Activated B cell treated with CpG ODN at 0.5 μM for 24 hours (primary cell): ENCODE measurements at regions of chr1 and their contacts with region 1.

Region 1: DNA sequence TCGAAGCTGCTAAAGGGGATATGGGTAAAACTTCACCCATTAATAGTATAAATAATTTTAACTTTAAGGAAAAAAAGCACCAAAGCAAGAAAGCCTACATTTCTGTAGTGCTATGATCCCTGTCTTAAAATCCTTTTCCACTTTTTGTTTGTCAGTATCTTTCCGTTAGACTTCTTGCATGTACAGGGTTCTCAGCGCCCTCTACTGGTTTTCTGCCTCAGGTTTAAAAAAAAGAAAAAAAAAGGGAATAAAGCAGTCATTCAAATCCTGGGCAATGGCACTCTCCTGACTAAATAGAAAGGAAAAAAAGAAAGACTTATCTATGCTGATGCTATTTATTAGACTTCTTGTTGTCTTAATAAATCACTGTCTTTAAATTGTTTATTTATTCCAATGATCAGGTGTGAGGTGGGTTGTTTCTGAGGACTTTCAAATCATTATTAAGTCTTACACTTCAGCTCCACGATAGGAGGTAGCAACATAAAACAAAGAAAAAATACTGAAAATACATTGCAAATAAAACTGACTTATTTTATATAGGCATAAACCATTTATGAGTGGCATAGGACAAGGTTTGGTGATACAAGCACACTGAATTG is 475.4 kb upstream of the NR5A2 start:
- DNase-seq: no peak
- ATAC-seq: no peak
- H3K4me3 Mint-ChIP-seq: no peak overlapping the region
- H3K27ac Mint-ChIP-seq: no peak overlapping the region
- H3K4me1 Mint-ChIP-seq: no peaks in the 10 kb centered on the region
- H3K27me3 Mint-ChIP-seq: peaks cover 6% of the 10 kb centered on the region
- CTCF ChIP-seq: peak; percentile 99

Region 2: DNA sequence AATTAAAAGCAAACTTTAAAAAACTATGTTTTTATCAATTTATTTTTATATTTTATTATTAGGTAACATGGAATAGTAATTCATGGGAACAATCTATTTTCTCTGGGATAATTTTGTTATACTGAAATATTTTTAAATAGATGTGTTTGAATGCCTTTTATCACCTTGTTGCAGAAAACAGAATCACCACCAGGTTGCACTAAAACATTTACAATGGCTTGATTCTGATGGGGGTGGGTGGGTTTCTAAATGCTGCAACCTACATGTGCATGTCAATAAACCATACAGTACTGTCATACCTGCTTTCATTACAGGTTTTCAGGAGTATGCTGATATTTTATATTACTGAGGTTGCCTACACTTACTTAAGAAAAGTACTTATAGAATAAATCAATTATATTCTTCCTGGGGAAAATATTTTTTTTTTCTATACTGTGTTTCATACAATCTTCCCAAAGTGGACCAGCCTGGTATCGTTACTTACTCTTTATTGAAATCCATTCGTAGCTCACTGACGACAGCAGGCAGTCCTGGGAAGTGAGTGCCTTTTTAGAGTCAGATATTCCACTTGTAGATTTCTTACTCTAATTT is 780.4 kb before region 1 on chr1:
- CTCF ChIA-PET with region 1: interaction called, 3 read pairs
- POLR2A ChIA-PET with region 1: no interaction called
- intact Hi-C with region 1: loop called (anchors 1 kb)
- DNase-seq: no peak
- ATAC-seq: no peak
- H3K4me3 Mint-ChIP-seq: no peak overlapping the region
- H3K27ac Mint-ChIP-seq: no peak overlapping the region
- H3K4me1 Mint-ChIP-seq: no peaks in the 10 kb centered on the region
- H3K27me3 Mint-ChIP-seq: no peaks in the 10 kb centered on the region
- CTCF ChIP-seq: no peak

Region 3: GRCh38 chr1:199113265-199113869 is 438.7 kb before region 1 on chr1:
- CTCF ChIA-PET with region 1: interaction called, 5 read pairs
- POLR2A ChIA-PET with region 1: no interaction called
- intact Hi-C with region 1: loop called (anchors 1 kb)
- DNase-seq: peak; percentile 21
- ATAC-seq: peak; percentile 57
- H3K4me3 Mint-ChIP-seq: no peak overlapping the region
- H3K27ac Mint-ChIP-seq: no peak overlapping the region
- H3K4me1 Mint-ChIP-seq: peaks cover 5% of the 10 kb centered on the region
- H3K27me3 Mint-ChIP-seq: no peaks in the 10 kb centered on the region
- CTCF ChIP-seq: no peak

Region 4: GRCh38 chr1:199243423-199244061 is 308.5 kb before region 1 on chr1:
- CTCF ChIA-PET with region 1: interaction called, 6 read pairs
- POLR2A ChIA-PET with region 1: no interaction called
- intact Hi-C with region 1: loop called (anchors 1 kb)
- DNase-seq: peak; percentile 54
- ATAC-seq: peak; percentile 97
- H3K4me3 Mint-ChIP-seq: no peak overlapping the region
- H3K27ac Mint-ChIP-seq: no peak overlapping the region
- H3K4me1 Mint-ChIP-seq: peaks cover 17% of the 10 kb centered on the region
- H3K27me3 Mint-ChIP-seq: no peaks in the 10 kb centered on the region
- CTCF ChIP-seq: no peak

Region 5: GRCh38 chr1:199279872-199280645 is 272.0 kb before region 1 on chr1:
- CTCF ChIA-PET with region 1: no interaction called
- POLR2A ChIA-PET with region 1: no interaction called
- intact Hi-C with region 1: loop called (anchors 5 kb)
- DNase-seq: no peak
- ATAC-seq: no peak
- H3K4me3 Mint-ChIP-seq: no peak overlapping the region
- H3K27ac Mint-ChIP-seq: no peak overlapping the region
- H3K4me1 Mint-ChIP-seq: peaks cover 19% of the 10 kb centered on the region
- H3K27me3 Mint-ChIP-seq: no peaks in the 10 kb centered on the region
- CTCF ChIP-seq: no peak

Region 6: DNA sequence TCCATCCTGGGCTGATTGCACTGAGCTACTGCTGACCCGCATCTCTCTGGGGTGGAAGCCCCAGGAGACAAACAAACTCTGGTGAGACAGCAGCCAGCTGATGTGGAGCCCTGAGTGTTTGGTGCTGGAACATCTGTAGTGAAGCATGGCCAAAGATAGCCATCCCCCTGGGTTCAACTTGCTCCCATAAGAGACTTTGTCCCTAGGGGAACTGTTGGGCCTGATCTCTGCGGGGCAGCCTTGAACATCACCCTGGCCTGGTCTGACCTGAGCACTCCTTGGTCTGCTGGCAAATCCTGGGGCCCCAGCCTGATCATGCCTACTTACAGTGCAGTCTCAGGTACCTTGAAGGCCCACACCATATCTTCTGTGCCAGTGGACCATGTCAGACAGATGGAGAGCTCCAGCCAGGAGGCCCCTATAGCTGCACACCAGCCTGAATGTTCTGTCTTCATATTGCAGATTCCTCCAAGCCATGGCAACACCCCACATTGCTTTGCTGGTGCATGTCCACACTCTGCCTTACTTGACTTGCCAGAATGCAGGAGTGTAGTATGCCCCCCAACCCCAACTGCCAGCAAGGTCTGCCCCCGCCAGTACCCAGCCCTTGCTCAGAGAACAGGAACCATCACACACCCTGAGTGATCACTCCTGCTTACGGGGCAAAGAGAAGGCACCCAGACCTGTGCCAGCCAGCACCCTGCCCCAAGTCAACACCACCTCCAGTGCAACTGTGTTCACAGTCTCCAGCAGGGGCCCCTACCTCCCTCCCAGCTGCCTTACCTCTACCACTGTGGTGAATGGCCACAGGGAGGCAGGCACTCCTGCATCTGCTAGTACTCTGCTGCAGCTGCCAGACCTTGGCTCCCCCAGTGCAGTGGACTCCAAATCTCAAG is 215.1 kb before region 1 on chr1:
- CTCF ChIA-PET with region 1: interaction called, 3 read pairs
- POLR2A ChIA-PET with region 1: no interaction called
- intact Hi-C with region 1: loop called (anchors 5 kb)
- DNase-seq: no peak
- ATAC-seq: no peak
- H3K4me3 Mint-ChIP-seq: no peak overlapping the region
- H3K27ac Mint-ChIP-seq: no peak overlapping the region
- H3K4me1 Mint-ChIP-seq: no peaks in the 10 kb centered on the region
- H3K27me3 Mint-ChIP-seq: peaks cover 7% of the 10 kb centered on the region
- CTCF ChIP-seq: no peak